AG04450 (cell line): ENCODE measurements at regions of chr12 and their contacts with region 1.

Region 1: DNA sequence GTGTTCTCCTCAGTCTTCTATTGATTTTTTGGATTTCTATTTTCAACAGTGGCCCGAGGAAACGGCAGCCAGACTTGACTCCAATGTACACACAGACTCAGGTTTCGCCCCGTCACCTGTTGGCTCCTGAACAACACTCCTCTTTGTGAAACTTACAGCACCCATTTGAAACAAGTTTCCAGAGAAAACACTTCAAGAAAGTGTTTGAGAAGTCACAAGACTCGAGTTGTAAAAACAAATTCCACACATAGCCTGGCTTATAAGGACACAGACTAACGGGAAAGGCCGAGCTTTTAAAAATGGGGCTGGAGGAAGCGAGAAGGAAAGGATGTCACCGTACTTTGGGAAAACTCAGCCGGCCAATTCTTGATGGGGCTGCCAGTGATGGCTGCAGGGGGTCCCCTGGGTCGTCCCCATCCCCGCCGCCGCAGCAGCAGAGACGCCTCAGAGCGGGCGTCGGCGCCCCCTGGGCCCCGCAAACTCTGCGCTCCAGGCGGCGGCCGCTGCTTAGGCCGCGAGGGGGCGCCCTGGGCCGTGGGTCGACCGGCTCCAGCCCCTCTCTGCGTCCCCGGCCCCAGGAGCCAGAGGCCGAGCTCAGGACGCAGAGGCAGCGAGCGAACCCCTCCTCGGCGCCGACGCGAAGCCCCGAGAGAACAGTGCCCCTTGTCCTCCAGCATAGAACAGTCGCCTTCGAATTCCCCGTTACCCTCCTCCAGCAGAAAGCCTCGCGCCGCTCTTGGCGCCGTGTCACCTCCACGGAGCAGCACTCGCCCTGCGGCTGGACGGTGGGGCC is 106.9 kb downstream of the PRICKLE1 start:
- DNase-seq: no peak
- H3K4me3 ChIP-seq: peak overlapping the region; percentile 86
- H3K27ac ChIP-seq: peak overlapping the region; percentile 84
- H3K27me3 ChIP-seq: no peaks in the 10 kb centered on the region
- CTCF ChIP-seq: peak; percentile 79

Region 2: GRCh38 chr12:41344776-41345470 is 1137.7 kb before region 1 on chr12:
- CTCF ChIA-PET with region 1: no interaction called
- POLR2A ChIA-PET with region 1: no interaction called
- DNase-seq: no peak
- H3K4me3 ChIP-seq: no peak overlapping the region
- H3K27ac ChIP-seq: no peak overlapping the region
- H3K27me3 ChIP-seq: no peaks in the 10 kb centered on the region
- CTCF ChIP-seq: no peak

Region 3: GRCh38 chr12:42568952-42569915 is 86.6 kb after region 1 on chr12:
- CTCF ChIA-PET with region 1: interaction called, 48 read pairs
- POLR2A ChIA-PET with region 1: interaction called, 11 read pairs
- DNase-seq: no peak
- H3K4me3 ChIP-seq: no peak overlapping the region
- H3K27ac ChIP-seq: no peak overlapping the region
- H3K27me3 ChIP-seq: no peaks in the 10 kb centered on the region
- CTCF ChIP-seq: peak; percentile 66

Region 4: GRCh38 chr12:42922505-42922850 is 439.8 kb after region 1 on chr12:
- CTCF ChIA-PET with region 1: no interaction called
- POLR2A ChIA-PET with region 1: interaction called, 15 read pairs
- DNase-seq: no peak
- H3K4me3 ChIP-seq: no peak overlapping the region
- H3K27ac ChIP-seq: no peak overlapping the region
- H3K27me3 ChIP-seq: no peaks in the 10 kb centered on the region
- CTCF ChIP-seq: no peak

Region 5: GRCh38 chr12:42985506-42985905 is 502.9 kb after region 1 on chr12:
- CTCF ChIA-PET with region 1: interaction called, 10 read pairs
- POLR2A ChIA-PET with region 1: no interaction called
- DNase-seq: peak; percentile 10
- H3K4me3 ChIP-seq: no peak overlapping the region
- H3K27ac ChIP-seq: no peak overlapping the region
- H3K27me3 ChIP-seq: no peaks in the 10 kb centered on the region
- CTCF ChIP-seq: no peak

Region 6: DNA sequence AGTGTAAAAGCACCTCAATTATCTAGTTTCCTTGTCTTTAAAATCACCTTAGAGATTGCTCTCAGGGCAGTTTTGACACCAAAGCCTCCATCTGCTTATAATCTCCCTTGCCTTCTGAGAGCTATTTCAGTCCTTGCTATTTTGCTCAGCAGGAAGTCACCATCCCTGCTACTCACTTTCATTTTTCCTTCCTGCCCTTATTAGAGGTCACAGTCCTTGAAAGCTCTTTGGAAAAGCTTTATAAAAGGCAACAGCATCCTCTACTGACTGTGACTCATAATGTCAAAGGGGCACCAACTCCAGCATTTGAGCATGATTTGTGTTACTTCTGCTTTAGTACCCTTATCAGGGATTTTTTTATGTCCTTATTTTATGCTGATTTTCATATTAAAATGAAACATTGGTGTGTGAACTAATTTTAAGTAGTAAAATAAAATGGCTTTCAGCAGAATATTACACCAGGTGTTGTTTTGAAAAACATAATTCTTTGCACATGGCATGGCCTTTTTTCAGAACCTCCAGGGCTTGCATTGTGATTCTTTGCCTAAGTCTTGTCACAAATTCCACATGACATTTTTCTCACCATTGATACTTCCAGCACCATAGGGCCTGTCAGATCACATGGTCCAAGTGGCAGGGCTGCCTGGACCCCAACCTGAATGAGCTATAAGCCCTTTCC is 856.3 kb after region 1 on chr12:
- CTCF ChIA-PET with region 1: interaction called, 61 read pairs
- POLR2A ChIA-PET with region 1: interaction called, 5 read pairs
- DNase-seq: no peak
- H3K4me3 ChIP-seq: no peak overlapping the region
- H3K27ac ChIP-seq: no peak overlapping the region
- H3K27me3 ChIP-seq: no peaks in the 10 kb centered on the region
- CTCF ChIP-seq: peak; percentile 63